PC-9 (cell line): ENCODE measurements at regions of chr18 and their contacts with region 1.

Region 1: DNA sequence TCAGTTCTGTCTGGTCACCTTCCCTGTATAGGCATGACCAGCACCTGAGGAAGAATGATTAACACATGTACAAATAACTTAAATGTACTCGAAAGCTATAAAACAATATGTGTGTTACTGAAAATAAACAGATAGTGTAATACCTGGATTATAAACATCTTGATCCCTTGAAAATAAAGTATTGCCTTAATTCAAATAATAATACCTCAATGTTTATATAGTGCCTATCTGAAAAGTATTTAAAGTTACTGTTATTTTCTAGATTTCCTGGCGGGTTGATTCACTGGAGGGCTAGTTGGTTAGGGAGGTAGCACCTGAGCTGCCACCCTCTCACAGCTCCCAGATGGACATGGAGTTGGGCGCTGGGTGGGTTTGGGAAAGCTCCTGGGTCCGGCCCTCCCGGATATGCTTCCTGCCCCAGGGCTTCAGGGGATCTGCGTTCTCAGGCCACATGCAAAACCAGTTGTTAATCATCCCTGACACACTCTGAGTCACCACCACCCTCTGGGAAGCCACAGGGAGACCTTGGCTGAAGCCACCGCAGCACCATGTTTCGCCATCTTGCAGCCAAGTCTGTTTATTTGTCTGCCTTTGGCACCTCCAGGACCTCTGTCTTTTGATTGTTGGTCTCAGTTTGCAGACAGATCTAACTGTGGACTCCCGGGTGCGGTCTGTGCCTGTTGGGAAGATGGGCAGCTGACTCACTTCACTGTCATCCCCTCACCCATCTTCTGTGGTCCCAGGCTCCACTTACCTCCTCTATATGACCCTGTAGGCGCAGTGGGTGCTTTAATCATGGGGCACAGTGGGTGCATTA is 35.3 kb downstream of the RAB31 start:
- DNase-seq: peak; percentile 94 to 96
- H3K4me3 ChIP-seq: peak overlapping the region; percentile 27
- H3K27ac ChIP-seq: peak overlapping the region; percentile 96
- H3K4me1 ChIP-seq: peaks cover 59% of the 10 kb centered on the region
- H3K27me3 ChIP-seq: no peaks in the 10 kb centered on the region
- CTCF ChIP-seq: no peak

Region 2: GRCh38 chr18:9516437-9517064 is 226.9 kb before region 1 on chr18:
- CTCF ChIA-PET with region 1: no interaction called
- POLR2A ChIA-PET with region 1: no interaction called
- intact Hi-C with region 1: no loop called
- DNase-seq: no peak
- H3K4me3 ChIP-seq: no peak overlapping the region
- H3K27ac ChIP-seq: no peak overlapping the region
- H3K4me1 ChIP-seq: peaks cover 29% of the 10 kb centered on the region
- H3K27me3 ChIP-seq: no peaks in the 10 kb centered on the region
- CTCF ChIP-seq: peak; percentile 90

Region 3: DNA sequence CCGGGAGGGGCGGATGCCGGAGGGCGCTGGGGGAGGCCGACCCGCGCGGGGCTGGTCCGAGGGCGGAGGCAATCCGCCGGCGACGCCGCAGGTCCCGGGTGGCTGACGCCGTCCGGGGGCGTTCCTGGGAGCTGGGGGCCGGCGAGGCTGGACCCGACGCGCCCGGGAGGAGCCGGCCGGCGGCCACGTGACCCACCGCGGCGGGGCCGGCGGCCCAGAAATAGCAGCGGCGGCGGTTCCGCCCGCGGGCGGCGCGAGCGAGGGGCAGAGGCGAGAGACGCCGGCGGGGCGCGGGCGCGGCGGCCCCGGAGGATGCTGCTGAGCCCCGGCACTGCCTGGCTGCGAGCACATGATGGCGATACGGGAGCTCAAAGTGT is 35.4 kb before region 1 on chr18 and contains the start of gene RAB31:
- CTCF ChIA-PET with region 1: no interaction called
- POLR2A ChIA-PET with region 1: no interaction called
- intact Hi-C with region 1: loop called (anchors 1 kb)
- DNase-seq: peak in 1 of 2 experiments; percentile 76
- H3K4me3 ChIP-seq: peak within 1 kb of the TSS; percentile 83
- H3K27ac ChIP-seq: peak within 1 kb of the TSS; percentile 2; the same call in 1 of the 2 replicates
- H3K4me1 ChIP-seq: peaks cover 43% of the 10 kb centered on the region
- H3K27me3 ChIP-seq: no peaks in the 10 kb centered on the region
- CTCF ChIP-seq: no peak
- total RNA-seq, gene RAB31: 48.6 and 51.0 TPM in 2 replicates

Region 4: DNA sequence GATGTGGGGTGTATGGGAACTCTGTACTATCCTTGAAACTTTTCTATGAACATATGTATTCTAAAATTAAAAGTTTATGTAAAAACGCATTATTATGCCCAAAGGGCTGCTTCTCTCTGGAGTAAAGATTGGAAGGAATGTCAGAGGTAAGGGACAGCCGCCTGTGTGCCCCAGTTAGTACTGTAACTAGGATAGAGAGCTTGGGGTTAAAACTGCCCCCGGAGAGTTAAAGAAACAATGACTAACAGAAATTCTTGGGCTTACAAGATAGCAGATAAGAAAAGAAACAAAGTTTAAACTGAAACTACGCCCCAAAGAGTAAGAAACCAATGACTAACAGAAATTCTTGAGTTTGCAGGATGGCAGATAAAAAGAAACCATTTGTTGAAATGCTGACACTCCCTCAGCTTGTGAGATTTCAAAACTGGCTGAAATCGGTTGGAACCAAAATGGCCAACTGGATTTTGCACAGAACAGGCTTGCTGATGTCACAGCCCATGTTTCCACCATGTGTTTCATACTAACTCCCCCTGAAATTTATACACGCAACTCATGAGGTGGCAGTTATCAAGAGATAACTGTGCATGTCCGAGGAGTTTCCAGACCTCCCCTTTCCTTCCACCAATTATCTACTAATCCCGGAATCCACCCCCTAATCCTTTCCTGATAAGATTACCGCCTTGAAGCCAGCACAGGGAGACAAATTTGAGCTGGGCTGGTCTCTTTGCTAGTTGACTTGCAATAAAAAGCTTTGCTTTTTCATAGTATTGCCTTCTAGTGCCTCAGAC is 133.7 kb after region 1 on chr18:
- CTCF ChIA-PET with region 1: no interaction called
- POLR2A ChIA-PET with region 1: interaction called, 3 read pairs
- intact Hi-C with region 1: loop called (anchors 1 kb)
- DNase-seq: peak; percentile 57 to 96
- H3K4me3 ChIP-seq: peak overlapping the region; percentile 52
- H3K27ac ChIP-seq: peak overlapping the region; percentile 97
- H3K4me1 ChIP-seq: peaks cover 34% of the 10 kb centered on the region
- H3K27me3 ChIP-seq: no peaks in the 10 kb centered on the region
- CTCF ChIP-seq: no peak